Heart left ventricle (tissue), 16 donors: ENCODE measurements at regions of chr10 and their contacts with region 1.

Region 1: DNA sequence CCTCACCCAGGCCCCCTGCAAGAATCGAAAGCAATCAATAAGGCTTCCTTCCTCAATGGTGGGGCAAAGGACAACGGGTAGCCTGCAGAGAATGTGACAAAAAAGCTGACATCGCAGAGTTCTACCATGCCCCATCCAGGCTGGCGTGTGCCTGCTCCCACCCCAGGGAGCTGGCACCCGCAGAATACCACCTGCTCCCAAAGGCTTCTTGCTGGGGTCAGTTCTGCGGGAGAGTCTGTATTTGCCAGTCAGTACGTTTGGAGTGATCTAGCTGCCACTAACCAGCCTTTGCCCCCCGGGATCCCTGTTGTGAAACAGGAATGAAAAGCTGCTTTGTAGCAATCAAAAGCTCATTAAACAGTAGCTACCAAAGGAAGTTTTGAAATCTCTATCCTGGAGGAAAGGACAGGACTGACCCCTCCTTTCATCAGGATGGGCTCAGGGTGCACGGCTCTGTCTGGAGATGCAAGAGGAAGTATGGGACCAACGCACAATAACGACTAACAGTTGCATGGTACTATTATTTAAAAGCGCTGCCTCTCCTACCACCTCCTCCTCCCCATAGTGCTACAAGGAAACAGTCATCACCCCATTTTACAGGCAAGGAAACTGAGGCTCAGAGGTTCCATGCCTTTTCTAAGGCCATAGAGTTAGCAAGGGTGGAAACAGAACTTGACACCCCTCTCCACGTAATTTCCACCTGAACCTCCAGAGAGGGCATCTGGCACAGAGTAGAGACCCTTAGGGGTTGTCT is 67.0 kb downstream of the FGFR2 start:
- DNase-seq: no peak
- ATAC-seq: no peak
- H3K4me3 ChIP-seq: no peak overlapping the region
- H3K27ac ChIP-seq: no peak overlapping the region
- H3K4me1 ChIP-seq: no peaks in the 10 kb centered on the region
- H3K27me3 ChIP-seq: peaks cover 0 to 4% (median 0%) of the 10 kb centered on the region in 9 donors
- CTCF ChIP-seq: no peak
- POLR2A ChIP-seq: no peak

Region 2: DNA sequence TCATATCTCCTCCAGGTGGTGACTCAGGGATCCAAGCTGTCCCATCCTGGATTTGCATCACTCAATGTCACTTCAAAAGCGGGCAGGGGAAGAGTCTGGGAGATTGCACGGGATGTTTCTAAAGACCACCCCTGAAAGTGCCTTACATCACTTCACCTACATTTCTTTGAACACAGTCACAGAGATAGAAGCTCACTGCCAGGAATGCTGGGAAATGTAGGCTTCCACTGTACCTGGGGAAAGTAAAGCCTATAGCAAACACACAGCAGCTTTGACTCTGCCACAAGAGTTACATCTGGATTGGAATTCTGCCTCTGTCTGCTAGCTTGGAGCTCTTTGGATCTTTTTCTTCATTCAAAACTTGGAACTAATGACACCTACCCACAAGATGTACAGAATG is 379.2 kb before region 1 on chr10:
- intact Hi-C with region 1: no loop called
- DNase-seq: no peak
- ATAC-seq: no peak
- H3K4me3 ChIP-seq: no peak overlapping the region
- H3K27ac ChIP-seq: no peak overlapping the region
- H3K4me1 ChIP-seq: no peaks in the 10 kb centered on the region
- H3K27me3 ChIP-seq: peaks cover 0 to 13% (median 0%) of the 10 kb centered on the region in 9 donors
- CTCF ChIP-seq: no peak
- POLR2A ChIP-seq: no peak

Region 3: GRCh38 chr10:121559326-121560026 is 28.2 kb after region 1 on chr10:
- intact Hi-C with region 1: no loop called
- DNase-seq: no peak
- ATAC-seq: no peak
- H3K4me3 ChIP-seq: no peak overlapping the region
- H3K27ac ChIP-seq: no peak overlapping the region
- H3K4me1 ChIP-seq: no peaks in the 10 kb centered on the region
- H3K27me3 ChIP-seq: peaks cover 0 to 6% (median 0%) of the 10 kb centered on the region in 9 donors
- CTCF ChIP-seq: no peak
- POLR2A ChIP-seq: no peak

Region 4: DNA sequence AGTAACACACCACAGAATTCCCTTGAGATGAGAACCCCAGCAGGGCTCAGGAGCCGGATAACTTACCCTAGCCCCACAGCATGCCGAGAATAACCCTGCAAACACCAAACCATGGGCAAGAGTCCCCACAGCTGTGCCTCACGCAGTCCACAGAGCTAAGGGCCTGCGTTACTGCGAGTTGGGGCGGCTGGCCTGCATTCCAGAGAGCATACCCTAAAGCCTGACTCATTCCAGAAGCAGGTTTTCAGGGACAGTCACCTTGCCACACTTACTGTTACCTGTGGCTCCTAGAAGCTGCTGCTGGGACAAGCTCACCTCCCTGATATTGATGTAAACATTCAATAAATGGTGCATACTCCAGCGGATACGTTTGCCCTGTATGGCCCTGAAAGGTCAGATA is 48.4 kb after region 1 on chr10:
- intact Hi-C with region 1: loop called in 1 of 10 experiments (anchors 5 kb)
- DNase-seq: no peak
- ATAC-seq: no peak
- H3K4me3 ChIP-seq: no peak overlapping the region
- H3K27ac ChIP-seq: no peak overlapping the region
- H3K4me1 ChIP-seq: no peaks in the 10 kb centered on the region
- H3K27me3 ChIP-seq: peaks cover 0 to 13% (median 0%) of the 10 kb centered on the region in 9 donors
- CTCF ChIP-seq: no peak
- POLR2A ChIP-seq: no peak

Region 5: GRCh38 chr10:121608469-121609190 is 77.4 kb after region 1 on chr10:
- intact Hi-C with region 1: no loop called
- DNase-seq: peak in 1 of 5 donors; percentile 34
- ATAC-seq: peak; percentile 57 to 94 (median 80)
- H3K4me3 ChIP-seq: peak overlapping the region in 9 of 12 donors; percentile 1 to 54 (median 35)
- H3K27ac ChIP-seq: no peak overlapping the region
- H3K4me1 ChIP-seq: peaks cover 0 to 7% (median 0%) of the 10 kb centered on the region in 12 donors
- H3K27me3 ChIP-seq: peaks cover 0 to 60% (median 18%) of the 10 kb centered on the region in 9 donors
- CTCF ChIP-seq: peak; percentile 71 to 90 (median 84)
- POLR2A ChIP-seq: no peak